Activated CD4-positive, alpha-beta memory T cell treated with anti-CD3 and anti-CD28 coated beads for 36 hours (primary cell): ENCODE measurements at regions of chr1 and their contacts with region 1.

Region 1: GRCh38 chr1:8878448-8879347 is at the start of gene ENO1:
- DNase-seq: peak; percentile 99
- H3K4me3 Mint-ChIP-seq: peak within 1 kb of the TSS; percentile 95
- H3K27ac Mint-ChIP-seq: peak within 1 kb of the TSS; percentile 100
- H3K4me1 Mint-ChIP-seq: peaks cover 31% of the 10 kb centered on the region
- H3K27me3 Mint-ChIP-seq: peaks cover 2% of the 10 kb centered on the region
- total RNA-seq, gene ENO1: 3,008 to 3,028 TPM

Region 2: DNA sequence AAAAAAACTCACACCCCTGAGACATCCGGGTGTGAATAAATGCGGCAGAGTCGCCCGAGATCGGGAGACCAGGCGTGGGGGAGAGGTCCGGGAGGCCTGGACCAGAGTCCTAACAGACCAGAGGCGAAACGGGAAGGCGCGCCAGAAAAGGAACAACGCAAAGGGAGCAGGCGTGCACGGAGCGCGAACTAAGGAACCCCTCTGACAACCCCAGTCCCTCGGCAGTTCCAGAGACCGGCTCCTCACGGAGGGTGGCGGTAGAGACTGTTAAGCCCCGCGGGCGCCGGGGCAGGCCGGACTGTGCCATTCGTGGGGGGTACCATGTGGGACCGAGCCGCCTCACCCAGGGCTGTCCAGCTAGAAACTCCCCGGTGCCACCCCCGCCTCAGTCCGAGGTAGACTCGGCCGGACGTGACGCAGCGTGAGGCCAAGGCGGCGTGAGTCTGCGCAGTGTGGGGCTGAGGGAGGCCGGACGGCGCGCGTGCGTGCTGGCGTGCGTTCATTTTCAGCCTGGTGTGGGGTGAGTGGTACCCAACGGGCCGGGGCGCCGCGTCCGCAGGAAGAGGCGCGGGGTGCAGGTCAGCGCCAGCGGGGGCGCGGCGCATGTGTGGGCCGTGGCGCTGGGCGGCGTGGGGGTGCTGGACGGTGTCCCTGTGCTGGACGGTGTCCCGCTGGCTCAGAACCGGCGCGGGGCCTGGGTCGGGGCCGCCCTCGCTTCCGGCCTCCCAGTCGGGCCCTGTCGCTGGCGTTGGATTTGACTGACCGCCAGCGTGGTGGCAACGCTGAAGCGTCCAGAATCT is 917.3 kb before region 1 on chr1 and contains the start of gene PARK7:
- CTCF ChIA-PET with region 1: no interaction called
- POLR2A ChIA-PET with region 1: no interaction called
- intact Hi-C with region 1: loop called (anchors 5 kb)
- DNase-seq: peak; percentile 100
- H3K4me3 Mint-ChIP-seq: peak within 1 kb of the TSS; percentile 93
- H3K27ac Mint-ChIP-seq: peak within 1 kb of the TSS; percentile 94
- H3K4me1 Mint-ChIP-seq: peaks cover 54% of the 10 kb centered on the region
- H3K27me3 Mint-ChIP-seq: no peaks in the 10 kb centered on the region
- total RNA-seq, gene PARK7: 429 to 457 TPM

Region 3: GRCh38 chr1:8858888-8859706 is 19.6 kb before region 1 on chr1:
- CTCF ChIA-PET with region 1: interaction called, 8 read pairs
- POLR2A ChIA-PET with region 1: interaction called, 45 read pairs
- intact Hi-C with region 1: loop called (anchors 1 kb)
- DNase-seq: peak; percentile 56
- H3K4me3 Mint-ChIP-seq: no peak overlapping the region
- H3K27ac Mint-ChIP-seq: peak overlapping the region; percentile 84
- H3K4me1 Mint-ChIP-seq: peaks cover 33% of the 10 kb centered on the region
- H3K27me3 Mint-ChIP-seq: no peaks in the 10 kb centered on the region

Region 4: GRCh38 chr1:8866792-8867415 is 11.8 kb before region 1 on chr1:
- CTCF ChIA-PET with region 1: interaction called, 7 read pairs
- POLR2A ChIA-PET with region 1: interaction called, 45 read pairs
- intact Hi-C with region 1: no loop called
- DNase-seq: peak; percentile 79
- H3K4me3 Mint-ChIP-seq: peak overlapping the region; percentile 20
- H3K27ac Mint-ChIP-seq: peak overlapping the region; percentile 91
- H3K4me1 Mint-ChIP-seq: peaks cover 61% of the 10 kb centered on the region
- H3K27me3 Mint-ChIP-seq: no peaks in the 10 kb centered on the region

Region 5: DNA sequence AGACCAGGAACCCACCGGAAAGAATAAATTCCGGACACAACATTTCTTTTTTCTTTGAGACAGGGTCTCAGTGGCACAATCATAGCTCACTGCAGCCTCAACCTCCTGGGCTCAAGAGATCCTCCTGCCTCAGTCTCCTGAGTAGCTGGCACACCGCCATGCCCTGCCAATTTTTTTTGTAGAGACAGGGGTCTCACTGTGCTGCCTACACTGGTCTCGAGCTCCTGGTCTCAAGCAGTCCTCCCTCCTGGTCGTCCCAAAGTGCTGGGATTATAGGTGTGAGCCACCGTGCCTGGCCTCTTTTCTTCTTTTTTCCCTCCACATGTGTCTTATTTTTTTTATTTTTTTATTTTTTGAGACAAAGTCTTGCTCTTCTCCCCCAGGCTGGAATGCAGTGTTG is 20.4 kb after region 1 on chr1:
- CTCF ChIA-PET with region 1: interaction called, 6 read pairs
- POLR2A ChIA-PET with region 1: interaction called, 39 read pairs
- intact Hi-C with region 1: loop called (anchors 1 kb)
- DNase-seq: no peak
- H3K4me3 Mint-ChIP-seq: no peak overlapping the region
- H3K27ac Mint-ChIP-seq: peak overlapping the region; percentile 99
- H3K4me1 Mint-ChIP-seq: peaks cover 47% of the 10 kb centered on the region
- H3K27me3 Mint-ChIP-seq: no peaks in the 10 kb centered on the region